Right ventricle myocardium inferior (tissue), 1 donor: ENCODE measurements at regions of chr18 and their contacts with region 1.

Region 1: DNA sequence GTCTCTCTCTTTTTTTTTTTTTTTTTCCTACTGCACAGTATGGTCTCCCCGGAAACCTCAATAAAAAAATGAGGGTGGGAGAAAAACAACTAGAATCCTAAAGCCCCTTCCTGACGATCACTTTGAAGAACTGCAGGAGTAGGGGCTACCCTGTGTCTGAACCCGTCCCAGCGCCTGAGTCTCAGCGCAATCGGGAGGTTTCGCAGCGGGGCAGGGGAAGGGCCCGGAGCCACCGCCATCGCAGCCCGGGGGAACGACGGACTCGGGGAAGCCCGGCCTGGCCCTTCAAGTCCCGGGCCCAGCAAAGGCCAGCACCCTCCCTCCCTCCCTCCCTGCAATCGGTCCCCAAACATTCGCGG is 411 bp downstream of the NARS1 start:
- DNase-seq: no peak
- ATAC-seq: peak; percentile 30

Region 2: GRCh38 chr18:57516056-57516455 is 105.2 kb before region 1 on chr18:
- intact Hi-C with region 1: no loop called
- DNase-seq: no peak
- ATAC-seq: no peak

Region 3: DNA sequence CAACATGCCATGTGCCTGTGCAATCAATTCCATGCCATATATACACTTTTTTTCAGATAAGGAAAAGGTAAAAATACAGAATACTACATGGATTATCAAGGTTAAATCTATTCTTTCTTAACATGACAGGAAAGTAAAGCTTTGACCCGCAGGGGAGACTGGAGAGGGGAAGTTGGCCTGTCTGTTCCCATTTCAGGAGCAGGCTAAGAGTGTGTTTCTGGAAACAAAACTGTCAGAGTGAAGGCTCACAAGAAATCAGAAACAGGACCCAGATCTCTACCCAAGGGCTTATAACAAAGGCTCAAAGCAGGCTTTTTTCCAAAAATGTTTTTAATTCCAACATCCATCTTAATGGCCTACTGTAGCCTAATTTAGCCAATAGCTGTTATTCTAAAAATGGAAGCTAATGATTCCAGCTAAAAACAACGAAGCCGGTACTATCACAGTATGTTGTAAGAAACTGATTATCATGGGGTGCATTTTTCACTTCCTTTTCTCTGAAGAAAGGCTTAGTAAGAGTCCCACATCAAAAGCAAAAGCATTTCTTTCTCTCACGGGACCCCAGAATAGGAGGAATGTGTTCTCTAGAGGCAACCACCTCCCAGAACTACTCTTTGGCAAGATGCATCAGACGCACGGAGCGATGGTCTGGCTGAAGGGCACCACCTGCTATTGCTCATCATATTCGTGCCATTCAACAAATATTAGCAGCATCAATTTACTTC is 76.1 kb before region 1 on chr18:
- intact Hi-C with region 1: no loop called
- DNase-seq: no peak
- ATAC-seq: no peak

Region 4: GRCh38 chr18:58128381-58129374 is 507.5 kb after region 1 on chr18:
- intact Hi-C with region 1: loop called (anchors 10 kb)
- DNase-seq: no peak
- ATAC-seq: no peak